Cardiac septum (tissue), 1 donor: ENCODE measurements at regions of chr1 and their contacts with region 1.

Region 1: DNA sequence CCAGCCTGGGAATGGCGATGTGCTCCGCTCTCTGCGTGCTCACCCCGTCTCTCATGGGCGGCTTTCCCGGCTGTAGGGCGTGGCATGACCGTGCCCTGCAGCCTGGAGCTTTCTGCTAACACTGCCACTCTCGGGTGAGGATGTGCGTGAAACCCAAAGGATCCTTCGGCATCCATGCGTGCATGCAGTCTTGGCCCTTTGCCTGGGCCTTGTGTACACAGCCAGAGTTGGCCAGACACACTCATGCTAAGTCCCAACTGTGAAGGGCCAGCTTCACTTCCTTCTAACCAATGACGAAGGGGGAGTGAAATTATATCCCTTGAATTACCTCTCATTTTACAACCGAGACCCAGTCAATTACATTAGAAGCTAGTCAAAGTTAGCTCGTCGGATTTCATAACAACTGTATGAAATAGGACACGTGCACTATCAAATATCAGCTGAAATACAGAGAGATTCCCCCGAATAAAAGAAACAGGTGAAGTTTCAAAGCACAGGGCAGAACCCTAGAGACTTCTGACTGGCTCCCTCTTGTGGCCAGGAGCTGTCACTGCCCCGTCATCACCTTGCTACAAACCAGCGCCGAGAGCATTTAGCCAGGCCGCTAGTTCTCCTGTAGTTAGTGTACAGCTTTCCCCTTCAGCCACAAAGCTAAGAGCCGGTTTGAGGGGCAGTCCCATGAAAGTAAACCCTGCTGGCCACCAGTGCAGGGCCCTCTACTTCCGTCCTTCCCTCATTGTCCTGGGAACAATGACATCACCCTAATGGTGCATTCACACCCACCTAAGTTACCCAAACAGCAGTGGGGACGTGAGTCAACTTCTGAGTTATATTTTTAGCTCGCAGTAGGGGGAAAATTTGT is 63.4 kb upstream of the COA6 start:
- DNase-seq: peak; percentile 81

Region 2: GRCh38 chr1:234114648-234115307 is 195.1 kb before region 1 on chr1:
- intact Hi-C with region 1: loop called (anchors 5 kb)
- DNase-seq: no peak

Region 3: GRCh38 chr1:234154320-234155251 is 155.2 kb before region 1 on chr1:
- intact Hi-C with region 1: loop called (anchors 5 kb)
- DNase-seq: no peak

Region 4: DNA sequence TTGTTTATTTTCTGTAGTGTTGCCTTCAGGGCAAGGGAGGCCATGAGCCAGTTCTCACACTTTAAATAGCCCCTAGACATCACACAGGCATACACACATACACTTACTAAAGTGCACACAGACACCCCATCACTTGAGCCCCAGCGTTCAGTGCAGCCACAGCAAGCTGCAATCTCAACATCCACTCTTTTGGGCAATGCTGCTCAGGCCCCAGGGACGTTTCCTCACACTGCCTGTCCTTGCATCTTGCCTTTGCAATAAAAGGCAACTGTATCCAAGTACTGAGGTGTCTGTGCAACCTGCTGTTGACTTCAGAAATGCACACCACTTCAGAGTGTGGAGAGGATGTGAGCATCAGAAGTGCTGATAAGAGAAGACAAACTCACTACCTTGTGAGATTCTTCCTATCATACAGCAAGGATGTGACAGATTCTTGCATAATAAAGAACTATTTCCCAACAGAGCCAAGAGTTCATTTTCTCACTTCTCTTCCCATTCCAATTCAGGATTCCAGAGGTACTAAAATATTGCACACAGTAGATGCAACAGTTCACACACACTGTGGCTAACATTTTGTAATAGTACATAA is 264.0 kb after region 1 on chr1:
- intact Hi-C with region 1: no loop called
- DNase-seq: no peak